ENCODE measurements at regions of chr14 and their contacts with region 1.

Region 1: GRCh38 chr14:69611201-69612011 is at the start of gene SUSD6:
- DNase-seq: peak; percentile 93
- H3K4me3 Mint-ChIP-seq: peak within 1 kb of the TSS; percentile 97
- H3K27ac Mint-ChIP-seq: peak within 1 kb of the TSS; percentile 98
- H3K4me1 Mint-ChIP-seq: peaks cover 51% of the 10 kb centered on the region
- H3K27me3 Mint-ChIP-seq: no peaks in the 10 kb centered on the region
- total RNA-seq, gene SUSD6: 69.9 to 72.2 TPM

Region 2: DNA sequence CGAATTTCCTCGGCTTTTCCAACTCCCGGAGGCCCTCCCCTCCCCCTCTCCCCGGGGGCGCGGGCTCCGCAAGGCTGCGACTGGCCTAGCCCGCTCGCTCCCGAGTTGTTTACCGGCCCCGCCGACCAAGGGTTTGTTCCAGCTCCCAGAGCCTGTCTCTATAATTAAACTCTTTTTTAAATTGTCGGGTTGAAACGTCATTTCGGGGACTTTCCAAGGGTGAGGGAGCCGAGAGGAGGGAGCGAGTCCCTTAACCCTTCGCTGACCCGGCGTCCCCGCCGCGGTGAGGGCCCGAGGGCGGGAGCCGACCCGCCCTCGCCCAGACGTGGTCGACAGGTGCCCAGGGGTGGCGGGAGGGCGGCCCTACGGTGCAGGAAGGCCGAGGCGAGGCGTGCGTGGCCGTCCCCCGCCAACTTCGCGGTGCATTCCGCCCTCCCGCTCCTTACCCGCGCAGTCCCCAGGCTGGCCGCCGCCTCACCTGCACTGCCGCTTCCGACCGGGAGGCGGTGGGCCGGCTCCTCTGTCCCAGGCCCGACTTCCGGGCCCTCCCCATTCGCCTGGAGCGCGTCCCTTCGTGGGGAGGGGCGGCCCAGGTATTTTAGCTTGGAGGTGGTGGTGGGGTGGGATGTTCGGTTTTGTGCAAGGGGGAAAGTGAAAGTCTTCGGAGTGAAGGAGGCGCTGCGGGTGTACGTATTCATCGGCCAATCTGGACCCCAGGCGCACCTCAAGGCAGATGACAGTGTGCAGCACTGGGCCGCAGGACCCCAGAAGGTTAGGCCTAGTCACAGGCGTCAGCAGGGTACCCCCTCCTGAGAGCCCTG is 815.6 kb before region 1 on chr14:
- CTCF ChIA-PET with region 1: no interaction called
- POLR2A ChIA-PET with region 1: no interaction called
- intact Hi-C with region 1: loop called (anchors 10 kb)
- DNase-seq: peak; percentile 87
- H3K4me3 Mint-ChIP-seq: peak overlapping the region; percentile 89
- H3K27ac Mint-ChIP-seq: peak overlapping the region; percentile 99
- H3K4me1 Mint-ChIP-seq: peaks cover 48% of the 10 kb centered on the region
- H3K27me3 Mint-ChIP-seq: no peaks in the 10 kb centered on the region

Region 3: GRCh38 chr14:69441948-69442347 is 169.5 kb before region 1 on chr14:
- CTCF ChIA-PET with region 1: no interaction called
- POLR2A ChIA-PET with region 1: no interaction called
- intact Hi-C with region 1: no loop called
- DNase-seq: no peak
- H3K4me3 Mint-ChIP-seq: peak overlapping the region; percentile 45
- H3K27ac Mint-ChIP-seq: peak overlapping the region; percentile 40
- H3K4me1 Mint-ChIP-seq: peaks cover 8% of the 10 kb centered on the region
- H3K27me3 Mint-ChIP-seq: no peaks in the 10 kb centered on the region

Region 4: GRCh38 chr14:69625299-69626131 is 14.1 kb after region 1 on chr14:
- CTCF ChIA-PET with region 1: interaction called, 9 read pairs
- POLR2A ChIA-PET with region 1: interaction called, 19 read pairs
- intact Hi-C with region 1: loop called (anchors 1 kb)
- DNase-seq: peak; percentile 92
- H3K4me3 Mint-ChIP-seq: peak overlapping the region; percentile 71
- H3K27ac Mint-ChIP-seq: peak overlapping the region; percentile 96
- H3K4me1 Mint-ChIP-seq: peaks cover 96% of the 10 kb centered on the region
- H3K27me3 Mint-ChIP-seq: no peaks in the 10 kb centered on the region

Region 5: DNA sequence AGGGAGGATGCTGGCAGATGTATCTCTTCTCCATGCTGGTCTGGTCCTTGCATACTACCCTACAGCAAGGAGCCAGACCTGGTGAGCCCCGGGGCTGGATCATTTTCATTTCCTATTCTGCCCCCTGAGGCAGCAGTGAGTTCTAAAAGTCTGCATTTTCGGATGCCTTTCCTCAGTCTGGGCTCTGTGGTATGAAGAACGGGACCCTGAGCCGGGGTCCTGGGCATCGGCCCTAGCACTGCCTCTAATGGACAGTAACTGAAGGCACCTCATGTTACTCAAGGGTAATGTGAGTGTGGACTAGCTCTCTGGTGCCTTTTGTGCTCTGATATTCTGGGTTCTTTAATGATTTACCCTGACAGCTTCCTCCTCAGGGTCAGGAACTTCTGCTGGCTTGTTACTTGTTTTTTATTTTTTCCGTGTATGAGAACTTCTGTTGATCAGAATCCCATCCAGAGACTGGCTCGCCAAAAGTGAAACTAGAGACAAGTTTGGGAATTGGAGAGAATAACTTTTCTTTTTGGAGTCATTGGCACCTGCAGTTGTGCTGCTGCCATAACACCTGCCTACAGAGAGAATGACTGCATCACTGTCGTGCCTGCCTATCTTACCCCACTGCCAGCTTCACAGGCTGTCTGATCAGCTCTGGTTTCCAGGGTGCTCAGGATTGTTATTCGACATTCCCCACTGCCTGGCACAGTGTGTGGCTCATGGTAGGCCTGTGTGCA is 62.3 kb after region 1 on chr14:
- CTCF ChIA-PET with region 1: interaction called, 26 read pairs
- POLR2A ChIA-PET with region 1: interaction called, 33 read pairs
- intact Hi-C with region 1: loop called (anchors 1 kb)
- DNase-seq: no peak
- H3K4me3 Mint-ChIP-seq: peak overlapping the region; percentile 61
- H3K27ac Mint-ChIP-seq: peak overlapping the region; percentile 97
- H3K4me1 Mint-ChIP-seq: peaks cover 91% of the 10 kb centered on the region
- H3K27me3 Mint-ChIP-seq: no peaks in the 10 kb centered on the region

Region 6: DNA sequence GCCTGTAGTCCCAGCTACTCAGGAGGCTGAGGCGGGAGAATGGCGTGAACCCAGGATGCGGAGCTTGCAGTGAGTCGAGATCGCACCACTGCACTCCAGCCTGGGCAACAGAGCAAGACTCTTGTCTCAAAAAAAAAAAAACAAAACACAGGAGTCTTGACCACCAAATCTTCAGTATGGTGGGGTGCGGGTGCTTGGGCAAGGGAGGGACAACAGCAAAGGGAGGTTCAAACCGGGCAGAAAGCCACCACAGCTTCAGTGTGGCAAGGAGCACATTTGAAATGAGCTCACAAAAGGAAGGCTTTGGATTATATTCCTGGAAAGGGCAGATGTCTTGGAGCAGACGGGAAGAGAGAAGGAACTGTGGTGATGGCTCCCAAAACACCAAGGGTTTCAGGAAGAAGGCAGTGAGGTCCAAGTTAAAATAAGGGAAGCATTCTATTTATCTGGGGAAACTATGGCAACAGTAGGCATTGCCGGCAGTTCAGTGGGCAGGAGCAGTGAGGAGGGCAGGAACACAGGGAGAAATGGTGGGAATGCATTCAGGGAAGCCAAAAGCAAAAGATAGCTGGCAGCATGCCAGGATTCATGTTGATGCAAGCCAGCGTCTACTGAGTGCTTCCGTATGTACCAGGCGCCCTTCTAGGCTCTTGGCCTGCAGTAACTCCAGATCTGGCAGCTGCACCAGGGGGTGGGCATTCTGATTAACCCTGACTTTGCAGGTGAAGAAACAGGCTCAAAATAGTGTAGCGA is 104.5 kb after region 1 on chr14:
- CTCF ChIA-PET with region 1: interaction called, 20 read pairs
- POLR2A ChIA-PET with region 1: interaction called, 5 read pairs
- intact Hi-C with region 1: no loop called
- DNase-seq: no peak
- H3K4me3 Mint-ChIP-seq: no peak overlapping the region
- H3K27ac Mint-ChIP-seq: peak overlapping the region; percentile 87
- H3K4me1 Mint-ChIP-seq: peaks cover 47% of the 10 kb centered on the region
- H3K27me3 Mint-ChIP-seq: no peaks in the 10 kb centered on the region

Region 7: DNA sequence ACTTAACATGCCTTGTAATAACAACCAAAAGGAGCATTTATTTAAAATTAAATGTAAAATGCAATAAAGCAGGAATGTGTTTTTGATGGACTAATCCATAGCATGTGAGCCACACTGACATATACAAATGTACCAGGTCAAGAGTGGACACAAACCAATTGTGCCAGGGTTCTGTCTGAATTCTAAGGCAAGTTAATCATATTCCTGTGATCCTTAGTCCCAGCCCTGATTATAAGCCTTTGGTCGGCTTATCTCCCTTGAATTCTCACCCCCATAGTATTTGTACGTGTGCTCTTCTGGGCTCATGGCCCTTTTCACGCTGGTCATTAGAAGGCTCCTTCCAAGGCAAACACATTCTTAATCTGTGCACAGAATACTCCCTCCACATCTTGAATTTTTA is 144.9 kb after region 1 on chr14:
- CTCF ChIA-PET with region 1: no interaction called
- POLR2A ChIA-PET with region 1: no interaction called
- intact Hi-C with region 1: no loop called
- DNase-seq: no peak
- H3K4me3 Mint-ChIP-seq: no peak overlapping the region
- H3K27ac Mint-ChIP-seq: no peak overlapping the region
- H3K4me1 Mint-ChIP-seq: peaks cover 13% of the 10 kb centered on the region
- H3K27me3 Mint-ChIP-seq: no peaks in the 10 kb centered on the region

Region 8: GRCh38 chr14:69766984-69767368 is 155.6 kb after region 1 on chr14 and contains the start of gene SRSF5:
- CTCF ChIA-PET with region 1: interaction called, 3 read pairs
- POLR2A ChIA-PET with region 1: interaction called, 22 read pairs
- intact Hi-C with region 1: loop called (anchors 1 kb)
- DNase-seq: peak; percentile 96
- H3K4me3 Mint-ChIP-seq: peak within 1 kb of the TSS; percentile 99
- H3K27ac Mint-ChIP-seq: peak within 1 kb of the TSS; percentile 99
- H3K4me1 Mint-ChIP-seq: peaks cover 73% of the 10 kb centered on the region
- H3K27me3 Mint-ChIP-seq: no peaks in the 10 kb centered on the region
- total RNA-seq, gene SRSF5: 289 to 303 TPM

Region 9: GRCh38 chr14:70887207-70887681 is 1275.8 kb after region 1 on chr14:
- CTCF ChIA-PET with region 1: no interaction called
- POLR2A ChIA-PET with region 1: no interaction called
- intact Hi-C with region 1: loop called (anchors 10 kb)
- DNase-seq: peak; percentile 25
- H3K4me3 Mint-ChIP-seq: peak overlapping the region; percentile 49
- H3K27ac Mint-ChIP-seq: peak overlapping the region; percentile 85
- H3K4me1 Mint-ChIP-seq: peaks cover 82% of the 10 kb centered on the region
- H3K27me3 Mint-ChIP-seq: no peaks in the 10 kb centered on the region

Measured in activated CD4-positive, alpha-beta memory T cell treated with anti-CD3 and anti-CD28 coated beads for 36 hours (primary cell).